Mammary epithelial cell (primary cell): ENCODE measurements at regions of chr5 and their contacts with region 1.

Region 1: DNA sequence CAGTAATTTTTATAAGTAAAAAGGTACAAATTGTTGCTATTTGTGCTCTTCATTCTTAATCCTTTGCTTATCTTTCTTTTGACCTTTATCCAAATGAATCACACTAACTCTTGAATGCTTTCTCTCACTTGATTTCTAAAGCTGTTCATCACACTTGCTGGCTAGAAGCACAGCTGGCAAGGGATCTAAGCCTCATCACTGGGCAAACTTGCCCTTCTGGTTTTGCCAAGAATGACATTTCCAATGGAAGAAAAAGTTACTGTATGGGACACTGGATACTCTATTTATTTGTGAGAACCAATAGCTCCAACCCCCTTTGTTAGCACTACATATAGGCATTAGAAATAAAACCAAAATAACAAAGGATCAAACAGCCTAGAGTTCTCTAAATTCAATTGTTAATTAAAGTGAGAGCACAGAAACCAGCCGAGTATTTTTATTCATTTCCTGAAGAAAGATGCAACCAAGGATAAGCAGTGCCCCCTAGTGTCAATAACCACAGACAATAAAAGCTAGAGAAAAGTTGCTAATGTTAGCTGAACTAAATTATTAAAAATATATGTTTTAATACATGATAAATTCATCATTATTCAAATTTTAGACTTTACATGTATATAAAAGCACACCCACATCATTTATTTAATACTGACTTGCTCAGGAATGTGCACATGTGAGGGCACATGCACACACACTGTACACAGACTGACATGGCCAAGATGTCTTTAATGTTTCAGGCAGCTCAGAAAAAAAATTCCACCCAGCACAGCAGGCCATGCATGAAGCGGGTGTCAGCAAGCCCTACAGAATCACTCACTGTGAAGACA is 59.8 kb upstream of the POU5F2 start:
- DNase-seq: peak; percentile 65
- H3K4me3 ChIP-seq: peak overlapping the region in 1 of 3 experiments; percentile 19
- H3K27ac ChIP-seq: no peak overlapping the region
- H3K4me1 ChIP-seq: peaks cover 4% of the 10 kb centered on the region
- H3K27me3 ChIP-seq: no peaks in the 10 kb centered on the region
- CTCF ChIP-seq: peak; percentile 54 to 66

Region 2: DNA sequence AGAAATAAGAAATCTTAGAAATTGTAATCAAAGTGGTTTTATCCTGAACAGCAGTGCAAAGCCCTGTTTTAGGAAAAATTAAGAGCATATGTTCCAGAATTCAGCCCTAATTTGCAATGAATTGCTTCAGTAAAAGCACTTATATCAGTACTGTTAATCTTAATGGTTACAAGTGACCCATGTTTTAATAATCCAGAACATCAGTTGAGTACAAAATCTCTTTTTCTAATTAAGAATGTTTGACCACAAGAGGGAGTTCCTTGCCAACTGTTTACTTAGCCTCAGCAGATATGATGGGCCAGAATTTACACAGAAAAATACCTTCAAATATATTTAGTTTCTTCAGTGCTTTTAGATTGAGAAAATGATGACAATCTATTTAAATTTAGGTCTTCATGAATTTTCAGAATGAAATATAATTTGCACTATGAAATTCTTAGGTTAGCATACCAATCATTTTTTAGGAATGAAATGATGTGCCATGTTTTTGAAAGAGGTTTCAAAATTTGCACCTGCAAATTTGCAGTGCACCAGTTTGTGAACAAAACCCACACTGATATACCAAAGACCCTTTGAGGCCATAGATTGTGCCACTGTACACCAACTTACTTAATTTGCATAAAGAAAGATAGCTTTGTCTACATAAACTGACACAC is 1491.7 kb before region 1 on chr5:
- CTCF ChIA-PET with region 1: no interaction called
- dilution Hi-C with region 1: no loop called
- in situ Hi-C with region 1: no loop called
- intact Hi-C with region 1: loop called (anchors 5 kb)
- DNase-seq: peak; percentile 1
- H3K4me3 ChIP-seq: no peak overlapping the region
- H3K27ac ChIP-seq: no peak overlapping the region
- H3K4me1 ChIP-seq: no peaks in the 10 kb centered on the region
- H3K27me3 ChIP-seq: no peaks in the 10 kb centered on the region
- CTCF ChIP-seq: peak; percentile 28 to 55

Region 3: DNA sequence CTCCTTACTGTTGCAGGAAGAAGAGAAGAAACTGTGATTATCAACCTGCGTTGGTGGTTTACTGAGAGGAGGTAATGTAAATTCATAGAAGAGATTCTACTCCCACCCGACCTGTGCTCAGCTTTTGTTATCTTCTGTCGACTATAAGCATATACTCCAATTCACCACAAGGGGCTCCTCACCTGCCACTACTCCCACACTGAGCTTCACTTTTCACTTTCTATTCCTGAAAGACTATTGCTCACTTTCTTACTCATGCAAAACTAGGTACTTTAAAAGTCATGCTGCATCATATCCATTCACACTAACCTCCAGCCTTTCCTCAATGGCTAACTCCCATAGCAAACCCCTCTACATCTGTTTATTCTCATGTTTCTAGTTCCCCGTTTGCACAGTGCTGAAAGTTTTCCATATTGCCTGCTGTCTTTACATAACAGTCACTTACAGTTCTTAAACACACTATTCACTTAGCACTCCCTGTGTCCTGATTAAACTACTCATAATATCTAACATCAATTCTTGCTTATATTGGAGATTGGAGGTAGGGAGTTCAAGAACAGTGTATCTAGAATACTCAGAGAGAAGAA is 1282.8 kb before region 1 on chr5:
- CTCF ChIA-PET with region 1: no interaction called
- dilution Hi-C with region 1: no loop called
- in situ Hi-C with region 1: no loop called
- intact Hi-C with region 1: loop called (anchors 5 kb)
- DNase-seq: peak; percentile 62
- H3K4me3 ChIP-seq: no peak overlapping the region
- H3K27ac ChIP-seq: no peak overlapping the region
- H3K4me1 ChIP-seq: no peaks in the 10 kb centered on the region
- H3K27me3 ChIP-seq: no peaks in the 10 kb centered on the region
- CTCF ChIP-seq: peak; percentile 79 to 88

Region 4: DNA sequence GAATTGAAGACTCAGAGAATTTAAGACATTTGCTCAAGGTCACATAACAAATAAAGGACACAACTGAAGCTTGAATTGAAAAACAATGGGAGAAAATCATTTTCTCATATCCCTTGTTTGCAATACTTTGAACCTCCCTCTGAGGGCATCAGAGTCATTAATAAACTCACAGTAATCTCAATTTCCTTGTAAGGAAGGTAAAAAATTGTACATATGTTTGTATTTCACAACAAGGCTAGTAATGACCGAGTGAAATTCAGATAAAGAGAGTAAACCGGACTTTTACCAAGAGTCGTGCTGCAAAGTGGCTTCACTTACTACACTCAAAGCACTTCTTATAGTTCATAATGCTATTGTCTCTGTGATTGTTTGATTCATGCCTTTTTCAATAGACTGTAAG is 885.2 kb before region 1 on chr5:
- CTCF ChIA-PET with region 1: interaction called, 3 read pairs
- dilution Hi-C with region 1: no loop called
- in situ Hi-C with region 1: no loop called
- intact Hi-C with region 1: loop called (anchors 10 kb)
- DNase-seq: peak; percentile 6
- H3K4me3 ChIP-seq: no peak overlapping the region
- H3K27ac ChIP-seq: no peak overlapping the region
- H3K4me1 ChIP-seq: no peaks in the 10 kb centered on the region
- H3K27me3 ChIP-seq: no peaks in the 10 kb centered on the region
- CTCF ChIP-seq: peak; percentile 17 to 34

Region 5: DNA sequence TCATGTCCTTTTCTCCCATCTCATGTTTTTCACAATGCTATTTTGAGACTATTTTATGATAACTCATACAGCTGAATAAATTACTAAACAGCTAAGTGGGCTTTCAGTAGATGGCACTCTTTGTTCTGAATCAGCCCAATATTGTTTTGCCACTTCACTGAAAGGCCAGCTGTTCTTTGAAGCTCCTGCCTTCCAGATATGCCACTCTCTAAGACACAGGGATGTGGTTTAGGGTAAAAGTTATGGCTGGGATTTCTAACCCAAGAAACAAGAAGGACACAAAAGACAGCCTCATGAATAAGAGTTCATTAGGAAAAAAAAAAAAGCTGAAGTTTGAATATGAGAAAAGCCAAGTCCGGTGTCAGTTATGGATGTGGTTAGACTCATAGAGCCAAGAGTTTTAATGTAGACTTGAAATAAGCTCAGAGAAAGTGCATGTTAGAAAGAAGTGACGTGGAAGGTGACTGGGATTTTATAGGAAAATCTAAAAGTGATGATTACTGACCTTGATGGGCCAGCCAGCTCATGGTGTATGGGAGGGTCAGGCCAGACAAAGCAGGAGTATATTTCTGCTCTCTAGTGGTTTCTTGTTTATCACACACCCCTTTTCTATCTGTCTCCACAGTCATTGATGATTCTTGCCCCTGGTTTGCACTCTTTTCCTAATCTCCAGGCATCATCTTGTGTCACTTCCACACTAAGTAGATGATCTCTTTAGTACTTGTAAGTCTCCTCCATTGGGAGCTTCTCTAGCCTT is 708.7 kb before region 1 on chr5:
- CTCF ChIA-PET with region 1: interaction called, 8 read pairs
- dilution Hi-C with region 1: no loop called
- in situ Hi-C with region 1: loop called in 1 of 2 experiments (anchors 25 kb)
- intact Hi-C with region 1: loop called (anchors 1 kb)
- DNase-seq: peak; percentile 42
- H3K4me3 ChIP-seq: no peak overlapping the region
- H3K27ac ChIP-seq: no peak overlapping the region
- H3K4me1 ChIP-seq: peaks cover 3% of the 10 kb centered on the region
- H3K27me3 ChIP-seq: no peaks in the 10 kb centered on the region
- CTCF ChIP-seq: peak; percentile 16 to 58

Region 6: GRCh38 chr5:93607367-93608258 is 193.6 kb before region 1 on chr5:
- CTCF ChIA-PET with region 1: no interaction called
- dilution Hi-C with region 1: no loop called
- in situ Hi-C with region 1: loop called in 1 of 2 experiments (anchors 25 kb)
- intact Hi-C with region 1: loop called (anchors 1 kb)
- DNase-seq: peak; percentile 41
- H3K4me3 ChIP-seq: no peak overlapping the region
- H3K27ac ChIP-seq: no peak overlapping the region
- H3K4me1 ChIP-seq: no peaks in the 10 kb centered on the region
- H3K27me3 ChIP-seq: peaks cover 63% of the 10 kb centered on the region
- CTCF ChIP-seq: peak; percentile 38 to 57

Region 7: GRCh38 chr5:93691997-93692396 is 109.2 kb before region 1 on chr5:
- CTCF ChIA-PET with region 1: no interaction called
- dilution Hi-C with region 1: no loop called
- in situ Hi-C with region 1: no loop called
- intact Hi-C with region 1: no loop called
- DNase-seq: no peak
- H3K4me3 ChIP-seq: no peak overlapping the region
- H3K27ac ChIP-seq: no peak overlapping the region
- H3K4me1 ChIP-seq: no peaks in the 10 kb centered on the region
- H3K27me3 ChIP-seq: no peaks in the 10 kb centered on the region
- CTCF ChIP-seq: no peak

Region 8: GRCh38 chr5:93717162-93717561 is 84.0 kb before region 1 on chr5:
- CTCF ChIA-PET with region 1: no interaction called
- dilution Hi-C with region 1: no loop called
- in situ Hi-C with region 1: no loop called
- intact Hi-C with region 1: no loop called
- DNase-seq: peak; percentile 28
- H3K4me3 ChIP-seq: no peak overlapping the region
- H3K27ac ChIP-seq: no peak overlapping the region
- H3K4me1 ChIP-seq: no peaks in the 10 kb centered on the region
- H3K27me3 ChIP-seq: no peaks in the 10 kb centered on the region
- CTCF ChIP-seq: no peak

Region 9: DNA sequence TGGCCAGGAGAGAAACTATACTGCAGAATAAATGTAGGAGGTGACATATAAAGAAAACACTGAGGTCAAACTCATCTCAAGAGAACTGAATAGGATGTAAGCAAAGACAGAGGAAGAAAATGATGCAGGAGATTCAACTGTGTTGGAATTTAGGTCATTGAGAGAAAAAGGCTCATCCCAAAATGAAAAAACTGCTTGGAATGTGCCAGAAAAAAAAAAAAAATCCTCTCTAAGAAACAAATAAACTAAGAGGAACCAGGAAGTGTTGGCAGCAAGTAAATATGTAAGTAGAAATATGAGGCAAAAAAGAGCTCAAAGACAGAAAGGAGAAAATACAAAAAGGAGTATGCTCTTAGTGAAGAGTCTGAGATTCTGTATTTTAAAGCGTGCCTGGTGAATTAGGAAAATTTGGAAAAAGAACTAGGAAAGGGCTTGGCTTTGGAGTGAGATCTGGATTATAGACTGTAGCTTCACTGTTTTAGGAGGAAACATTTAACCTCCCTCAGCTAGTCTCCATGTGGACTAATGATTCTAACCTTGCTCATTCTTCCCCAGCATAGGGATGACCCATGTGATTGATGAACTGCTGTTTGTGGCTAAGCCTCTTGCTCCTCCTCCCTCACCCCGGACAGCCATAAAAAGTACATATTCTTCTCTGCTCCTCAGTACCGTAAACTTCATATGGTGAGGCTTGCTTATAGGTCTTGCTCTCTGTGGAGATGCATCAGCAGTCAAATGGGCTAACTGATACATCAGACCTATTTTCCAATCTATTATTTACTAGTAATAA is 125.8 kb after region 1 on chr5:
- CTCF ChIA-PET with region 1: no interaction called
- dilution Hi-C with region 1: no loop called
- in situ Hi-C with region 1: no loop called
- intact Hi-C with region 1: no loop called
- DNase-seq: no peak
- H3K4me3 ChIP-seq: no peak overlapping the region
- H3K27ac ChIP-seq: no peak overlapping the region
- H3K4me1 ChIP-seq: peaks cover 15% of the 10 kb centered on the region
- H3K27me3 ChIP-seq: no peaks in the 10 kb centered on the region
- CTCF ChIP-seq: no peak

Region 10: GRCh38 chr5:94389515-94389899 is 588.3 kb after region 1 on chr5:
- CTCF ChIA-PET with region 1: no interaction called
- dilution Hi-C with region 1: no loop called
- in situ Hi-C with region 1: no loop called
- intact Hi-C with region 1: no loop called
- DNase-seq: no peak
- H3K4me3 ChIP-seq: no peak overlapping the region
- H3K27ac ChIP-seq: no peak overlapping the region
- H3K4me1 ChIP-seq: no peaks in the 10 kb centered on the region
- H3K27me3 ChIP-seq: no peaks in the 10 kb centered on the region
- CTCF ChIP-seq: no peak